ENCODE measurements at regions of chr12 and their contacts with region 1.

Region 1: GRCh38 chr12:71216725-71217579 is 59.2 kb upstream of the TSPAN8 start:
- DNase-seq: peak; percentile 20
- H3K4me3 Mint-ChIP-seq: no peak overlapping the region
- H3K27ac Mint-ChIP-seq: no peak overlapping the region
- H3K4me1 Mint-ChIP-seq: no peaks in the 10 kb centered on the region
- H3K27me3 Mint-ChIP-seq: no peaks in the 10 kb centered on the region

Region 2: GRCh38 chr12:71236133-71236660 is 19.2 kb after region 1 on chr12:
- CTCF ChIA-PET with region 1: no interaction called
- intact Hi-C with region 1: no loop called
- DNase-seq: no peak
- H3K4me3 Mint-ChIP-seq: no peak overlapping the region
- H3K27ac Mint-ChIP-seq: no peak overlapping the region
- H3K4me1 Mint-ChIP-seq: no peaks in the 10 kb centered on the region
- H3K27me3 Mint-ChIP-seq: no peaks in the 10 kb centered on the region

Region 3: DNA sequence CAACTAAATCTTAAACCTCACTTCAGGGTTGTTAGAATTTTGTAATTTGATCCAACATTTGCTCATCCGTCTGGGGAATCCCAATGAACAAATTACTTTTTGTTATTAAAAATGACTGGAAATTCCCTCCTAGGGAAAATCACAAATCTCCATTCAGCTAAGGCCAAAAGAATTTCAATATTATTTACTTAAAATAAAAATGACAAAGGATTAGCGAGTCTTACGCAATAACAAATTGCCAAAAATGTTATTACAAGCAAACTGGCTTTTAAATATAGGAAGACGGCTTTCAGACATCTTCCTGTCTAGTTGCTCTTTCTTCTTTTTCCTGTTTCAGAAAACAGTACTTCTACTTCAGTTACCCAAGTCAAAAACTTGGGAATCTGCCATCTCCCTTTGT is 33.2 kb after region 1 on chr12:
- CTCF ChIA-PET with region 1: no interaction called
- intact Hi-C with region 1: no loop called
- DNase-seq: no peak
- H3K4me3 Mint-ChIP-seq: no peak overlapping the region
- H3K27ac Mint-ChIP-seq: no peak overlapping the region
- H3K4me1 Mint-ChIP-seq: no peaks in the 10 kb centered on the region
- H3K27me3 Mint-ChIP-seq: no peaks in the 10 kb centered on the region

Region 4: DNA sequence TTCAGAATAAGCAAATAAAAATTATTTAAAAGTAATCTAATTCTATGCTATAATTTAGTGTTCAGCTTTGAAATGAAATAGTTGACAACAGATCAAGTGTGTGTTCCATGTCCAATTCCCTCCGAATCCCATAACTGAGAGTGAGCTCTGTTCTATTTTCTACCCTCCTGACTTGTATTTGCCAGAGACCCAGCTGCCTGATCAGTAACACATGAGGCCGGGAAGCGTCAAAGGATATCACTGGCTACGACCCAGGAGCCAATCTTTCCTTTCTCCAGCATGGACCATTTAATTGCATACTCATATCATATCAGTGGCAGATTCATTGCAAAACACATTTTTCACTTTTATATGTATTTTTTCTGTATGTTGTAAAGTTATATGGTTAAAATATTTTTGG is 49.7 kb after region 1 on chr12:
- CTCF ChIA-PET with region 1: no interaction called
- intact Hi-C with region 1: no loop called
- DNase-seq: no peak
- H3K4me3 Mint-ChIP-seq: no peak overlapping the region
- H3K27ac Mint-ChIP-seq: no peak overlapping the region
- H3K4me1 Mint-ChIP-seq: no peaks in the 10 kb centered on the region
- H3K27me3 Mint-ChIP-seq: no peaks in the 10 kb centered on the region

Region 5: GRCh38 chr12:71356569-71356968 is 139.6 kb after region 1 on chr12:
- CTCF ChIA-PET with region 1: no interaction called
- intact Hi-C with region 1: no loop called
- DNase-seq: no peak
- H3K4me3 Mint-ChIP-seq: no peak overlapping the region
- H3K27ac Mint-ChIP-seq: no peak overlapping the region
- H3K4me1 Mint-ChIP-seq: no peaks in the 10 kb centered on the region
- H3K27me3 Mint-ChIP-seq: peaks cover 9% of the 10 kb centered on the region

Region 6: DNA sequence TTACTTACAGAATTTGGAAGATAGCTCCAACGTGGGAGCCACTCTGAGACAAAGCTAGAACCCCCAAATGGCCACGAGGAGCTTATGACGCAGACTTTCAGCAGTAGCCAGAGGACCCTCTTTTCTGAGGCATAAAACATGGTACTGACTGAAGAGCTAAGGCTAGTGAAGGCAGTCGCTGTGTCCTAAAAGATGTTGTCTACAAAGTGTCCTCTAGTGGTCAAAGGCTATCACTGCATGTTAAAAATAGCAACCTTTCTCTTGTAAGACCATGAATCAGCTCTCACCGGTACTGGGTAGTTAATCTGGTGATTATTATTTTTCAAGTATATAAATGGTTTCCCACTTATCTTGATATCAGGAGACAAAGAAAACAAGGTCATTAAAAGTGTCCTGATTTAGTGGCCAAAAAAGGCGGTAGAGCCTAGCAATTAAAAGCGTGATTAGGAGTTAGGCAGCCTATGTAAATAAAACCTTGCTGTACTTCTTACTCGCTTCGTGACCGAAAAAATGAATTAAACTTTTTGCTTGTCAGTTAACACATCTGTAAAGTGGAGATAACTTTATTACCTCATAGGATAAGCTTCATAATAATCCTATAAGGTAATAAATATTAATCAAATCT is 175.7 kb after region 1 on chr12:
- CTCF ChIA-PET with region 1: no interaction called
- intact Hi-C with region 1: loop called (anchors 1 kb)
- DNase-seq: no peak
- H3K4me3 Mint-ChIP-seq: no peak overlapping the region
- H3K27ac Mint-ChIP-seq: no peak overlapping the region
- H3K4me1 Mint-ChIP-seq: no peaks in the 10 kb centered on the region
- H3K27me3 Mint-ChIP-seq: peaks cover 12% of the 10 kb centered on the region

Measured in activated naive CD4-positive, alpha-beta T cell treated with anti-CD3 and anti-CD28 coated beads for 36 hours (primary cell).